ENCODE measurements at regions of chr10 and their contacts with region 1.

Region 1: DNA sequence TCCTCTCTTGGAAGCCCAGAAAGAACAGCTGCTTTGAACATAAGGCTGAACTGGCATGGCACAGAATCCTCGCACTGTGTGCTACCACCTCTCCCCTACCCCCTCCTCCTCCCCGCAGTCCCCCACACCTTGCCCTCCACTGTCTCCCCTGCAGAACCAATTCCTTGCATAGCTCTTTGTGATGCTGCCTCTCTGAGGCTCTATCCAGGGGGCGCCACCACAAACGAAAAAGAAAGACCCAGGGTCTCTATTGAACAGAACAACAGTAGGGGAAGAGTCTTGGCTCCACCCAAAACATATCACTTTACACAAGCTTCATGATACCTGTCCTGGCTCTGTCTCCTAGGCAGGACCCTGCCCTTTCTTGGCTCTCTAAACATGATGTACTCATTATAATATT is 26.2 kb upstream of the EBLN1 start:
- DNase-seq: no peak
- H3K4me3 ChIP-seq: no peak overlapping the region
- H3K27ac ChIP-seq: no peak overlapping the region
- H3K4me1 ChIP-seq: no peaks in the 10 kb centered on the region
- H3K27me3 ChIP-seq: no peaks in the 10 kb centered on the region
- CTCF ChIP-seq: peak in 1 of 6 experiments; percentile 11
- POLR2A ChIP-seq: no peak

Region 2: GRCh38 chr10:22308390-22308789 is 64.4 kb after region 1 on chr10:
- intact Hi-C with region 1: loop called (anchors 10 kb)
- DNase-seq: no peak
- H3K4me3 ChIP-seq: no peak overlapping the region
- H3K27ac ChIP-seq: no peak overlapping the region
- H3K4me1 ChIP-seq: no peaks in the 10 kb centered on the region
- H3K27me3 ChIP-seq: peaks cover 4% of the 10 kb centered on the region
- CTCF ChIP-seq: no peak
- POLR2A ChIP-seq: no peak

Region 3: GRCh38 chr10:22958338-22958737 is 714.3 kb after region 1 on chr10:
- intact Hi-C with region 1: no loop called
- DNase-seq: no peak
- H3K4me3 ChIP-seq: no peak overlapping the region
- H3K27ac ChIP-seq: no peak overlapping the region
- H3K4me1 ChIP-seq: no peaks in the 10 kb centered on the region
- H3K27me3 ChIP-seq: no peaks in the 10 kb centered on the region
- CTCF ChIP-seq: no peak
- POLR2A ChIP-seq: no peak